Mammary epithelial cell (primary cell): ENCODE measurements at regions of chr16 and their contacts with region 1.

Region 1: DNA sequence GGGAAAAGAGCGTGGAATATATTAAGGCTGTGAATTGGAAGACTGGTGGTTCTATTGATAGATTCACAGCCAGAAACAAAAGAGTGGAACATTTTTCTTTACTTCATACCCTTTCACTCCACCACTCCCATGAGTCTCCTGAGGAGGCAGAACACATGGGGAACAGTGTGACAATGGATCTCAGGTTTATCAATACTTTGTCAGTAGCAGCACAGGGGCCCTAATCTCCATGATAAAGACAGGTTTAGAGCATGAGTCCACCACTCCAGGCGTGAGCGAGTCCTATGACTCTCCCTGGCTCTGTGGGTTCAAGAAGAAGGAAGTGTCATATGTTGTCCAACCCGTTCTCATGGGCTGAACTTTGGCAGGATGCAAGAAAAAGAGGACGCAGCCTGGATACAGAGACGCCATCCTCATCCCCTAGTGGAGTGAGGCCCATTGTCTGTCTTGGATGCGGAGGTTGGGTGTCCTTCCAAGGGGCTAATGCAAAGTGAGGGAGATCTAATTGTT is 361.2 kb downstream of the TMEM114 start:
- DNase-seq: no peak
- H3K4me3 ChIP-seq: no peak overlapping the region
- H3K27ac ChIP-seq: no peak overlapping the region
- H3K4me1 ChIP-seq: no peaks in the 10 kb centered on the region
- H3K27me3 ChIP-seq: no peaks in the 10 kb centered on the region
- CTCF ChIP-seq: no peak

Region 2: DNA sequence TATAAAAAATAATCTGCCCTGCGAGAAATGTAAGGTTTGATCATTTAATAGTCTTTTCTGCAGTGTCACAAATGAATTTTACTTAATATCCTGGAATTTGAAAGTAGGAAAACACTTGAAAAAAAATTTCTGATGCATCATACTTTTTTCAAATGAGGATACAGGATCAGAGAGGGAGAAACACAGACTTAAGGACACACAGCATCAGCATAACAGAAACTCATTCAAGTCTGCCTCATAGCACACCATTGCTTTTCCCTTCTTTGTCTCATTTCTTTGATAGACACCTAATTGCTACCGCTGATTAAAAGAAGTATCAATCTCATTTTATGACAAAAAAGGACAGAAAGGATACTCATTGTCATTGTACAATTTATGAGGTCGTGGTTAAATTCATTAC is 42.3 kb after region 1 on chr16:
- CTCF ChIA-PET with region 1: no interaction called
- dilution Hi-C with region 1: no loop called
- in situ Hi-C with region 1: no loop called
- intact Hi-C with region 1: no loop called
- DNase-seq: no peak
- H3K4me3 ChIP-seq: no peak overlapping the region
- H3K27ac ChIP-seq: no peak overlapping the region
- H3K4me1 ChIP-seq: no peaks in the 10 kb centered on the region
- H3K27me3 ChIP-seq: no peaks in the 10 kb centered on the region
- CTCF ChIP-seq: no peak

Region 3: GRCh38 chr16:8355675-8356074 is 126.6 kb after region 1 on chr16:
- CTCF ChIA-PET with region 1: no interaction called
- dilution Hi-C with region 1: loop called (anchors 25 kb)
- in situ Hi-C with region 1: no loop called
- intact Hi-C with region 1: no loop called
- DNase-seq: no peak
- H3K4me3 ChIP-seq: no peak overlapping the region
- H3K27ac ChIP-seq: no peak overlapping the region
- H3K4me1 ChIP-seq: no peaks in the 10 kb centered on the region
- H3K27me3 ChIP-seq: no peaks in the 10 kb centered on the region
- CTCF ChIP-seq: no peak